ENCODE measurements at regions of chr6 and their contacts with region 1.

Region 1: DNA sequence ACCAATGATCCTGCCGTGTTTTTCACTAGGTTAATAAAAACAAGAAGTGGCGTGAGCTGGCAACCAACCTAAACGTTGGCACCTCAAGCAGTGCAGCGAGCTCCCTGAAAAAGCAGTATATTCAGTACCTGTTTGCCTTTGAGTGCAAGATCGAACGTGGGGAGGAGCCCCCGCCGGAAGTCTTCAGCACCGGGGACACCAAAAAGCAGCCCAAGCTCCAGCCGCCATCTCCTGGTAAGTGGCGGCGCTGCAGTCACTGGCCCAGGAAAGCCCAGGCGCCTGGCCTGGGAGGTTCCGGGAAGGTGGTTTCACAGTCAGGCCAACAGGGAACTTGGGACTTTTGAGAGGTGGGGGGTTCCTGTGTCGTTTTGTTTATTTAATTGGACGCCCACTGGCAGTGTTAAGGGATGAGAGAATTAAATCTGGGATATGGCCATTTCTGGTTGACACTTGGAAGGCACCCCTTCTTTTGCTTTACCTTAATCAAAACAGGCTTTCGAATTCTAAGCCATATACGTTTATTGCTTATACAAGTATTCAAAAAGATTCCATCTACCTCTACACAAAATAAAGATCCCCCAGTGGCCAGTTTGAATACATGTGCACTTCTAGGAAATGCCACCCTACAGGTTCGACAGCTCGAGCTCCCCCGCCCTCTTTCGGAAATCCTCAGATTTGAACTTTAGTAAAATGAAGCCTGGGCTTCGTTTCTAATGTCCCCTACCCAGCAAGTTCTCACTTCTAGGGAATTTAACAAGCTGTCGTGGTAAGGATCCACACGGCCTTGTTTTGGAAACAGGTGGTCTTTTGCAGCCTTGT is 138.9 kb downstream of the TMEM242 start:
- DNase-seq: peak; percentile 66 to 86 (median 73)
- H3K4me3 ChIP-seq: peak overlapping the region in 1 of 4 donors; percentile 20
- H3K27ac ChIP-seq: no peak overlapping the region
- H3K4me1 ChIP-seq: peaks cover 9 to 13% of the 10 kb centered on the region in 2 donors
- H3K27me3 ChIP-seq: no peaks in the 10 kb centered on the region
- CTCF ChIP-seq: peak; percentile 73 to 91 (median 88)
- POLR2A ChIP-seq: no peak

Region 2: GRCh38 chr6:156564127-156564806 is 620.1 kb before region 1 on chr6:
- intact Hi-C with region 1: loop called in 1 of 2 experiments (anchors 5 kb)
- DNase-seq: peak; percentile 56 to 92 (median 82)
- H3K4me3 ChIP-seq: no peak overlapping the region
- H3K27ac ChIP-seq: no peak overlapping the region
- H3K4me1 ChIP-seq: no peaks in the 10 kb centered on the region
- H3K27me3 ChIP-seq: no peaks in the 10 kb centered on the region
- CTCF ChIP-seq: peak; percentile 87 to 96 (median 90)
- POLR2A ChIP-seq: no peak

Region 3: DNA sequence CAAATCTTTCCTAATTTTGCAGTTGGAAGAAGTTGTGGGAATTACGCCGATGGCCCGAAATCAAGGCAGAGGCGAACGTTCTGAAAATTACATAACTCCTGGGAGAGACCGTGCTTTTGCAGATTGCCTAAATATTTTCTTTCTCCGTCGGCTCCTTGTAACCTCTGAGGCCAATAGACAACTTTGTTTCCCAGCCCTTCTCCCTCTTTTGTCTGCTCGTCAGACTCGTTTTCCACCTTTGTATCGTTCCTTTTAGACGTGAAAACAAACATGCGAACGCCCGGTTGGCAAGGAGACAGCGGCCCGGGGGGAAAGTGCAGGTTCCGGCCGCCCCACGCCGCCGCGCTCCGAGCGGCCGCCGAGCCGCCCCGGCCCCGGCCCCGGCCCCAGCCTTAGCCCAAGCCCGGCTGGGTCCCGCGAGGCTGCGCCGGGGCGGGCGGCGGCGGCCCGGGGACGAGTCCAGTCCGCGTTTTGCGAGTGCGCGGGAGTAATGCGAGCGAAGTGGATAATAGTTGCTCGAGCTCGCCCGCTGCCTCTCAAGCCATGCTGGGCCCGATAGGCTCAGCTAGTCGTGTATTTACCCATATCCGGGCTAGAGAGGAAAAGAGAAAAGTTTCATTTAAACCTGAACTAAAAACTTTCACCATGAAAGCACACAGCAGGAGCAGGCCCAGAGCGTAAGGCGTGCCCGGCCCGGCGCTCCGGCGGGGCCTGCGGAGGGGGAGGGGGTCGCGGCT is 407.4 kb before region 1 on chr6 and contains the start of gene ARID1B:
- intact Hi-C with region 1: loop called in 1 of 2 experiments (anchors 10 kb)
- DNase-seq: peak; percentile 74 to 91 (median 87)
- H3K4me3 ChIP-seq: peak within 1 kb of the TSS; percentile 46 to 98 (median 81)
- H3K27ac ChIP-seq: peak within 1 kb of the TSS; percentile 93 to 98 (median 96)
- H3K4me1 ChIP-seq: peaks cover 21 to 29% of the 10 kb centered on the region in 2 donors
- H3K27me3 ChIP-seq: no peaks in the 10 kb centered on the region
- CTCF ChIP-seq: peak in 1 of 6 experiments; percentile 12
- POLR2A ChIP-seq: peak; percentile 79 to 83
- total RNA-seq, gene ARID1B: 36.8 to 85.6 (median 64.0) TPM

Region 4: DNA sequence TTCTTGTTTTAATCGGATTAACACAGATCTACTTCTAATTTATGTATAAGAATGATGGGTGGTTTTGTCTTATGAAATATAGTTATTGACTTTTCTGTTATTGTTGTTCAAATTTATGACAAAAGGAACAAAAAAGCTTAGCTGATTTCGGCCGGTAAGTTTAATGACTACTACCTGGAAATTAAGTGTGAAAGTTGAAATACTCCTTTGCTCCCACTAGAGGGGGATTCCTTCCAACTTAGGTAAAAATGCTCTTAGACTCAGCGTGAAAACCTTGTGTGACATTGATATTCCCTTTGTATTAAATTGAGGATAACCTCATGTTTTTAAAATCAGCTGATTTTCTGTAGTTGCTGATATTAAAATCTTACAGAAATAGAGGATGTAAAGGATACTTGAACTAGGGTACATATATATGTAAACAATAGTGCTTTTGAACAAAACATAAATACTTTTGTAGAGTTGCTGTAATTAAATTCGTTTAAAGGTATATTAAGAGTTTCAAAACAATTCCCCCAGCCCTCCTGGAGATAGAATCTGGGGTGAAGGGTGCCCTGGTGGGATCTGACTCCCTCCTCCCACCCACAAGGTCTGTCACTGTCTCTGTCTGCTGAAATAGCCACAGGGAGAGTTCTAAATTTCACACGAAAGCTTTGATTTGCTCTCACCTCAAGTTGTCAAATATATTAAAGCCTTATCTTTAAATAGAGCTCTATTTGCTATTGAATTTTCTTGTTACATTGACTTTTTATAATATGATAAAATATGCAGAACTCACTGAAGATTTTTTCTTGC is 149.8 kb before region 1 on chr6:
- intact Hi-C with region 1: loop called (anchors 10 kb)
- DNase-seq: no peak
- H3K4me3 ChIP-seq: no peak overlapping the region
- H3K27ac ChIP-seq: no peak overlapping the region
- H3K4me1 ChIP-seq: peaks cover 5 to 54% of the 10 kb centered on the region in 2 donors
- H3K27me3 ChIP-seq: no peaks in the 10 kb centered on the region
- CTCF ChIP-seq: peak; percentile 43 to 79 (median 72)
- POLR2A ChIP-seq: no peak